Activated CD4-positive, alpha-beta T cell treated with anti-CD3 and anti-CD28 coated beads for 36 hours (primary cell): ENCODE measurements at regions of chr1 and their contacts with region 1.

Region 1: GRCh38 chr1:151327223-151327902 is at the start of gene PI4KB:
- DNase-seq: peak; percentile 92
- ATAC-seq: peak; percentile 94
- H3K4me3 Mint-ChIP-seq: peak within 1 kb of the TSS; percentile 92
- H3K27ac Mint-ChIP-seq: peak within 1 kb of the TSS; percentile 95
- H3K4me1 Mint-ChIP-seq: peaks cover 30% of the 10 kb centered on the region
- H3K27me3 Mint-ChIP-seq: no peaks in the 10 kb centered on the region
- total RNA-seq, gene PI4KB: 53.0 to 54.5 TPM

Region 2: DNA sequence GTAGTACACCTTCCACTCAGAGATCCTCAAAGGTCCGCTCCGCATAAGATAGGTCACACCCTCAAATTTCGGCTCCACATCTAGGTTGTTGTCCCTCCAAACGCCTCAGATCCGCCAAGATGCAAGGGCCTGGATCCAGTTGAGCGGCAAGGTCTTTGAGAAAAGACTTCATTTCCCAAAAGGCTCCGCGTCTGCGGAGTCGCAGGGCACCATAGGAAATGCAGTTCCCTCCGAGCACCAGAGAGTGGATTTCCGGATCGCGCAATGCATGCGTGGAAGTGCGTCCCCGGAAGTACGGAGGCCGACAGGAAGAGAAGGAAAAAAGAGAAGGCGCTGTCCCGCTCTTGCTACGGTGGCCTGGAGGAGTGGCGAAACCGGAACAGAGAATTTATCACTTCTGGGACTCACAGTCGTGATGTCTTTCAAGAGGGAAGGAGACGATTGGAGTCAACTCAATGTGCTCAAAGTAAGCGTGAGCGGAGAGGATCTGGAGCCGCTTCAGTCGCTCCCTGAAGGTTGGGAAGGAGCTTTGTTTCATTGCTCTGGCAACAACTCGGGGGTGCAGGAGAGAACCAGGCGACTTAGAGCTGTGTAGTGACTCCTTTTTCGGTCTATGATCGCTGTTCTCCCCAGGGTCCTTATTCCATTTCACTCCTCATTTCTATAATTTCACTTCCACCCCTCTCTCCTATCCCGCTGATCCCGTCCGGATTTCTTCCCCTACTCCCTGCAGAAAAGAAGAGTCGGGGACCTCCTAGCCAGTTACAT is 161.4 kb before region 1 on chr1 and contains the starts of genes LYSMD1 and SCNM1:
- CTCF ChIA-PET with region 1: interaction called, 4 read pairs
- POLR2A ChIA-PET with region 1: no interaction called
- intact Hi-C with region 1: loop called in 1 of 2 experiments (anchors 1 kb)
- DNase-seq: peak; percentile 98
- ATAC-seq: peak; percentile 96
- H3K4me3 Mint-ChIP-seq: peak within 1 kb of the TSS; percentile 92
- H3K27ac Mint-ChIP-seq: peak within 1 kb of the TSS; percentile 98
- H3K4me1 Mint-ChIP-seq: peaks cover 48% of the 10 kb centered on the region
- H3K27me3 Mint-ChIP-seq: no peaks in the 10 kb centered on the region
- total RNA-seq, gene LYSMD1: 4.3 to 5.1 TPM
- total RNA-seq, gene SCNM1: 64.3 to 90.8 TPM

Region 3: DNA sequence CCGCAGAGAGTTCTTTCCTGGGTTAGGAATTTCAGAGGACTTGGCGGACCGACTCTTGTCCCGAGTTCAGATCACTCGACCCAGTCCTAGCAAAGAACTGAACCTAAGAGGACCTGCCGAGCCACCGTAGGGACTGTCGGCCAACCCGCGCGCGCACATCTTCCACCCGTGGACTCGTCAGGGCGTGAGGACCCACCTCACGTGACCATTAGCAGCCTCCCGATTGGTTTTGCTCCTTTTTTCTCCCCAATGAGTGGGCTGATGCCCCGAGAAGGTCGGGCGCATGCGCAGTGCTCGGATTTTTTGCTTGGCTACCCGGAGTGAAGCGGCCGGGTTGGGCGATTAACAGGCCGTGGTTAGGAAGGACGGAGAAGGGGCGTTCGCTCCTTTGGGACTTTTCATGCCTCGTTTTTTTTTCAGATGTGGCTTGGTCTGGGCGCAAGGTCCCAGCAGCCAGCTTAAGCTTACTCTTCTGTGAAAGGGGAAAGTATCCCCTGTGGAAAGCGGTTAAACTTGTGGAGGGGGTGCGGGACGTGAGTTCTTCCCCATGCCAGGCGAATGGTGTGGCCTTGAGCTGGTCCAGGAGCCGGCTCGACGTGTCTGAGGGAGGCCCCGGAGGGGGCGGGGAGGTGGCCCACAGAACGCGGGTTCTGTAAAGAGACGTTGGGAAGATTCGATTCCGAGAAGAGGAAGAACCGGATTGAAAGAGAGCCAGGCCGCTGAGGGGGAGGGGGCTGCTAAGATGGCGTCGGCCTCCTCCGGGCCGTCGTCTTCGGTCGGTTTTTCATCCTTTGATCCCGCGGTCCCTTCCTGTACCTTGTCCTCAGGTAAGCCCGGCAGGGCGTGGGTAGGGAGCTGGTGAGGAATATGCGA is 128.9 kb before region 1 on chr1 and contains the start of gene PIP5K1A:
- CTCF ChIA-PET with region 1: no interaction called
- POLR2A ChIA-PET with region 1: no interaction called
- intact Hi-C with region 1: loop called (anchors 1 to 5 kb)
- DNase-seq: peak; percentile 100
- ATAC-seq: peak; percentile 90
- H3K4me3 Mint-ChIP-seq: peak within 1 kb of the TSS; percentile 98
- H3K27ac Mint-ChIP-seq: peak within 1 kb of the TSS; percentile 100
- H3K4me1 Mint-ChIP-seq: peaks cover 38% of the 10 kb centered on the region
- H3K27me3 Mint-ChIP-seq: no peaks in the 10 kb centered on the region
- total RNA-seq, gene PIP5K1A: 74.5 to 85.1 TPM

Region 4: DNA sequence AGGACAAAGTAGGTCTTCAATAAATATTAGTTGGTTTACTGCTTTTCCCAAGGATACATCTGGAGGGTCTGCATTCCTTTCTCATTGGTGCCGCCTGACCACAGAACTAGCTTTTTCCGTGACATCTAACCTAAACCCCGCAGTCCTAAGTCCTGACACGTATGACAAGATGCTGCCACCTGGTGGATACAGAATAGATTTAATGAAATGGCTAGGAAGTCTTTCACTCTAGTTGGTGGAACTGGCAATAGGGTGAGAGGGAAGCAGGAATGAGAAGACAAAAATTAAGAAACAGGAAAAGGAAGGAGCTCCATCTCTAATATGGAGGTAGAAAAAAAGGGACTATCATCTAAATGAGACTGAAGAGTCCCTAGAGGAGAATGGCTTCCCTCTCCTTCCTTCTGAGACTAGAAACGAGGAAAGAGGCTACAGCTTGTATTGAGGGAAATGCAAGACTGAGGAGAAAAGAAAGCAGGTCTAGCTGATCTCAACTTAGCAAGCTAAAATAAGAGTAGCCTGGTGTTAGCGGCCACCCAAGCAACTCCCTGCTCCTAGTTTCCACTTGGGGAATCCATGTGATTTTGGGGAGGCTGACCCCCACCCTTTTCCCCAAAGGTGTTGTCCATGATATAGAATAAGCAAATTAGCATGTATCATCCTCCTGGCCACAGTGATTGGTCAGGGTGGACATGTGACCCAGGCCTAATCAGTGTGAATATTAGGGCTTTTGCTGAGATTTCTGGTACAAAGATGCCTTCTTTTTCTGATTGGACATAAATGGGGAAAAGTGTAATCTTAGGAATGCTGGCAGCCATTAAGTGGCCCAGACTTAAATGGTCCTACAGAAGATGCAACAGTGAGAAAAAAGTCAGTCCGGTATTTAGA is 13.7 kb after region 1 on chr1:
- CTCF ChIA-PET with region 1: interaction called, 80 read pairs
- POLR2A ChIA-PET with region 1: interaction called, 4 read pairs
- intact Hi-C with region 1: loop called in 1 of 2 experiments (anchors 1 kb)
- DNase-seq: peak; percentile 65
- ATAC-seq: peak; percentile 91
- H3K4me3 Mint-ChIP-seq: no peak overlapping the region
- H3K27ac Mint-ChIP-seq: peak overlapping the region; percentile 39
- H3K4me1 Mint-ChIP-seq: peaks cover 24% of the 10 kb centered on the region
- H3K27me3 Mint-ChIP-seq: no peaks in the 10 kb centered on the region

Region 5: GRCh38 chr1:151399890-151400495 is 72.6 kb after region 1 on chr1:
- CTCF ChIA-PET with region 1: interaction called, 3 read pairs
- POLR2A ChIA-PET with region 1: no interaction called
- intact Hi-C with region 1: loop called in 1 of 2 experiments (anchors 1 kb)
- DNase-seq: peak; percentile 43
- ATAC-seq: peak; percentile 21
- H3K4me3 Mint-ChIP-seq: peak overlapping the region; percentile 88
- H3K27ac Mint-ChIP-seq: peak overlapping the region; percentile 99
- H3K4me1 Mint-ChIP-seq: peaks cover 29% of the 10 kb centered on the region
- H3K27me3 Mint-ChIP-seq: no peaks in the 10 kb centered on the region

Region 6: DNA sequence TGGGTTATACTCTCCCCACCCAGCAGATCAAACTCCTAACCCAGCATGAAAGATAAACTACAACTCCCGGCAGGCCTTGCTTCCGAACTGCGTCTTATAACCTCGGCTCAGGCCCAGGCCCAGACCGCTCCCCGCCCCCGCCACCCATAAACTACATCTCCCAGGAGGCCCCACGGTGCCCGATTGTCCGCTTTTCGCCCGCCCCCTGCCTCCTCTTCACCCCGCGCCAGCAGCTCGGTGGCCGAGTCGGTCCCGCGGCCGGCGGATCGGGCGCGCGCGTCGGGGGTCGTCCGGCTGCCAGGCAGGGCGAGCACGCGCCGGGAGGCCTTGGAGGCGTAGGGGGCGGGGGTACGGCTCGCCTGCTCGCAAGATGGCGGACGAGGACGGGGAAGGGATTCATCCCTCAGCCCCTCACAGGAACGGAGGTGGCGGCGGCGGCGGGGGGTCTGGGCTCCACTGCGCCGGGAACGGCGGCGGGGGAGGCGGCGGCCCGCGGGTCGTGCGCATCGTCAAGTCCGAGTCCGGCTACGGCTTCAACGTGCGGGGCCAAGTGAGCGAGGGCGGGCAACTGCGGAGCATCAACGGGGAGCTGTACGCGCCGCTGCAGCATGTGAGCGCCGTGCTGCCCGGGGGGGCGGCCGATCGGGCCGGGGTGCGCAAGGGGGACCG is 284.6 kb after region 1 on chr1 and contains the start of gene SNX27:
- CTCF ChIA-PET with region 1: no interaction called
- POLR2A ChIA-PET with region 1: no interaction called
- intact Hi-C with region 1: loop called in 1 of 2 experiments (anchors 1 kb)
- DNase-seq: peak; percentile 95
- ATAC-seq: peak; percentile 93
- H3K4me3 Mint-ChIP-seq: peak within 1 kb of the TSS; percentile 99
- H3K27ac Mint-ChIP-seq: peak within 1 kb of the TSS; percentile 95
- H3K4me1 Mint-ChIP-seq: peaks cover 46% of the 10 kb centered on the region
- H3K27me3 Mint-ChIP-seq: peaks cover 6% of the 10 kb centered on the region
- total RNA-seq, gene SNX27: 28.5 to 29.1 TPM

Region 7: DNA sequence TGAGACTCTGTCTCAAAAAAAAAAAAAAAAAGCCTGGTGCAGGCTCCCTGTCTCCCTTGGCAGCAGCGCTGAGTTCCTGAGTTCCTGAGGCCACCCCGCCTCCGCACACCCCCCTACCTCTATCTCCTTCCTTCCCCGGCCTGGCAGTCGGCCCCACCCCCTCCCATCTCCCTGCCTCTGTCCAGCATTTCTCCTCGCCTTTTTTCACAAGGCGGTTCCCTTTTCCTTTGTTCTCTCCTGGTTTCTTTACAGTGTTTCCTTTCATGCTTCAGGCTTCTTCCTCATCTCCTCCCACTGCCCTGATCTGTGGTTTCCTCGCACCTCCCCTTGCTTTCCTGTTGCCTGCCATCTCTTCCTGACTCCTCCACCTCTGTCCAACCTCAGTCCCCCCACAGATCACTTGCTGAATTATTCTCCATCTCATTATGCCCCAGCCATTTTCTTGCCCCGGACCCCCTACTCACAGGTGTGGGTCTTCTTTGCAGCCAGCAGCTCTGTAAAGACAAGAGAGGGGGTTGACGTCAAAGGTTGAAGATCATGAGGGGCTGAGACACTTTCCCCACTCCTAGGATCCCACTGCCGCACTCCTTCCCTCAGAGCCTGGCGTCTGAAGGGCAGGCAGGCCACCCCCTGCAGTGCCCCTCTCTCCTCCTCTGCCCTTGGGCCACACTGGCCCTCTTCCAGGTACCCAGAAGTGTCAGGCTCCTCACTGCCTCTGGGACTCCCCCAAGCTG is 501.8 kb after region 1 on chr1:
- CTCF ChIA-PET with region 1: no interaction called
- POLR2A ChIA-PET with region 1: no interaction called
- intact Hi-C with region 1: no loop called
- DNase-seq: no peak
- ATAC-seq: no peak
- H3K4me3 Mint-ChIP-seq: peak overlapping the region; percentile 11
- H3K27ac Mint-ChIP-seq: peak overlapping the region; percentile 69
- H3K4me1 Mint-ChIP-seq: peaks cover 79% of the 10 kb centered on the region
- H3K27me3 Mint-ChIP-seq: no peaks in the 10 kb centered on the region